Cardiac septum (tissue), 1 donor: ENCODE measurements at regions of chr17 and their contacts with region 1.

Region 1: DNA sequence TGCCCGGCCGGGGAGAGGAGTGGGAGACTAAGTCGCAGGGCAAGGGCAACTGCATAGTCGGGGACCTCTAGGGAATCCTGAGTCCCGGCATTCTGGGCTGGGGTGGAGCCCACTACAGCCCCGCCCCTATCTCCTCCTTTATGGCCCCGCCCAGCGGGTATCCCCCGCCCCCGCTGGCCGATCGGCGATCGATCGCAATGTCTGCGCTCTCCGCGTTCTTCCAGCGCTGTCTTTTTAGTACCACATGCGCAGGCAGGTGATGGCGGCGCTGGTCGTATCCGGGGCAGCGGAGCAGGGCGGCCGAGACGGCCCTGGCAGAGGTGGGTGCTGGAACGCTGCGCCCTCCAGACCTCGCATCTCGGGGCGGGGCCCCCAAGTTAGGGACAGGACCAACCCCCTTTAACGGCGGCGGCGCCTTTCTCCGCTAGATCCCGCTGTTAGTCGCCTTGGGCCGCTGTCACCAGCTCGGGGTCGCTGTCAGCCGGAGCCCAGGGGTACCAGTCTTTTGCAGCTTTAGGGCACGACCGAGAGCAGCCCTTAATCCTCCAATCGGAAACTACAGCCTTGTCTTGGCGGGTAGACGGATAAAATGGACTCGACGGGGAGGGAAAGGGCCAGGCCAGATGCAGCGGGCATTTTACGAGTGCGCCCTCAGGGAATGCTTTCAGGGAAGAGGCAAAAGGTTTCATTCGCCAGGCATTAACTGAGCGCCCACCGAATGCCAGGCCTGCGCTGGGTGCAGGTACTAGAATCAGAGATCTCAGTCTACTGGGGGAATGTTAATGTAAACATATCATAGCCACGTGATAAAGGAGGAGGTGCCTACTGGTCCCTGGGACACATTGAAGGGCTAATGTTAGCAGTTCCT is at the start of gene DPH1:
- DNase-seq: peak; percentile 92
- total RNA-seq, gene DPH1: 28.8 TPM

Region 2: GRCh38 chr17:1661045-1661444 is 369.1 kb before region 1 on chr17:
- intact Hi-C with region 1: loop called (anchors 10 kb)
- DNase-seq: no peak

Region 3: DNA sequence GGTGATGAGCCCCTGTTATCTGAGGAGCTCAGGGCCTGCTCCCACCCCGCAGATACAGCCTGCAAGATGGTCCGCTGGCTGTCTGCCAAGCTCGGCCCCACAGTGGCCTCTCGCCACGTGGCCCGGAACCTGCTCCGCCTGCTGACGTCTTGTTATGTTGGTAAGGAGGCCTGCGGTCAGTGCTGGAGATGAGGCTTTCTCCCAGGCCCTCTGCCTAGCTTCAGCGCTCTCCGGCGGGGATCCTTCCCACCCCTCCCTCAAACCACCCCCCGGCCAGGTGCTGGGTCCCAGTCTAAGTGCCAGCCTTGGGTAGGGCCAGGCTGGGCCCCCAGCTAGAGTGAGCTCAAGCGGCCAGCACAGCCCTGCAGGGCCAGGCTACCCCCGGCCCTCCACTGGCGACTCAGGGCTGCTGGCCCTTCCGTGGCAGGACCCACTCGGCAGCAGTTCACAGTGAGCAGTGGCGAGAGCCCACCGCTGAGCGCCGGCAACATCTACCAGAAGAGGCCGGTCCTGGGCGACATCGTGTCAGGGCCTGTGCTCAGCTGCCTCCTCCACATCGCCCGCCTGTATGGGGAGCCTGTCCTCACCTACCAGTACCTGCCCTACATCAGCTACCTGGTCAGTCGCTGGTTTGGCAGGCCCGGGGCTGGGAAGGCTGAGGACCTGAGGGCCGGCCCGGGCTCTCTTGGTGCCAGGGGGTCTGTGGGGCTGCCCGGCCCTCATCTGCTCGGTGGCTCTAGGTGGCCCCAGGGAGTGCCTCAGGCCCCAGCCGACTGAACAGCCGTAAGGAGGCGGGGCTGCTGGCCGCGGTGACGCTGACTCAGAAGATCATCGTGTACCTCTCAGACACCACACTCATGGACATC is 299.6 kb before region 1 on chr17:
- intact Hi-C with region 1: loop called (anchors 5 kb)
- DNase-seq: peak; percentile 87

Region 4: DNA sequence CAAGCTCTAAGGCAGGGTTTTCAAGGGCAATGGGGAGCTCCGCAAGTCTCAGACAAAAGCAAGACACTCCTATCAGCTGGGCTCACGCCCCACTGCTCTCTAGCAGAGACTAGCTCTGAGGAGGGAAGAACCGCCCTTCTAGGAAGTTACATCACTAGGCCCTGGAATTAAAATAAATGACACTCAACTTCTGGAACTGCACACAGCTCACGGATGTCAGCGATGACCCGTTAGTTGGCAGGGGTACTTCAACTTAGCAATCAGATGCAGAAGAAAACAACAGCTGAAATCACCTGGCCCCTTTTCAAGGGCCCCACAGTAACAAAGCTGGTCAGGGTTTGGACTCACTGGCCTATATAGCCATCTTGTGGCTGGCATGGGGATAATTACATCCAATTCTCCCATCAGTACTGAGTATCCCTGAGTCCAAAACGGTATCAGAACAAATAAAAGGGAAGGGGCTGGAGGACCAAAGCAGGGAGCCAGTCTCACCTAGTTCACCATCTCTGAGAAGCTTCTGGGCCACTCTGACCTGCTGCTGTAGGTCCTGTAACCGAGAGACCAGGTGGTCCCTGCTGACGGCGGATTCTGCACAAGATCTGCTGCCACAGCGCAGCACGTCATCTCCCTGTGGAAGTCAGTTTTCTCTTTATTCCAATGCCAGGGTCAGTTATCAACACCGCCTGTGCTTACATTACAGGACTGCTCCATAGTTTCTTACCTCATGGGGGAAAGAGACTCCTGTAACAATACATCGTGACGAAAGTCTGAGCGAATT is 246.1 kb before region 1 on chr17:
- intact Hi-C with region 1: no loop called
- DNase-seq: peak; percentile 83

Region 5: GRCh38 chr17:1908699-1909309 is 121.3 kb before region 1 on chr17:
- intact Hi-C with region 1: loop called (anchors 1 kb)
- DNase-seq: no peak